AG04449 (cell line): ENCODE measurements at regions of chr5 and their contacts with region 1.

Region 1: GRCh38 chr5:128201065-128201926 is 117.7 kb downstream of the SLC12A2 start:
- DNase-seq: no peak
- H3K4me3 ChIP-seq: peak overlapping the region; percentile 36; the same call in 1 of the 2 replicates
- CTCF ChIP-seq: peak; percentile 80

Region 2: GRCh38 chr5:127564002-127564769 is 637.1 kb before region 1 on chr5:
- CTCF ChIA-PET with region 1: interaction called, 68 read pairs
- POLR2A ChIA-PET with region 1: no interaction called
- DNase-seq: no peak
- H3K4me3 ChIP-seq: no peak overlapping the region
- CTCF ChIP-seq: peak; percentile 58

Region 3: DNA sequence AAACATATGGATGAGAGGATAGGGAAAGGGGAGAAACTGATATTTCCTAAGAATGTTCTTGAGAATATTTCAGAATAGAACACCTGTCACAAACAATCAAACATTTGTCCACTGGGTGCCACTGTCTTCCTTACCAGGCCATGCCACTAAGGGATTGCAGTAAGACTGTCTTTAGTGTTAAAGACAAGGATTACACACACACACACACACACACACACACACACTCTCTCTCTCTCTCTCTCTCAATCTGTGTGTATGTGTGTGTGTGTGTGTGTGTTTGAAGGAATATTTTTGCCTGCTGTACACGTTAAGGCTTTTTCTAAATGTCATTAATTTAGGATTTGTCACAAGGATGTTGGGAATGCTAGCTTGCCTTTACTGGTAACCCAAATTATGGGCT is 443.7 kb before region 1 on chr5:
- CTCF ChIA-PET with region 1: interaction called, 22 read pairs
- POLR2A ChIA-PET with region 1: no interaction called
- DNase-seq: no peak
- H3K4me3 ChIP-seq: no peak overlapping the region
- CTCF ChIP-seq: peak; percentile 29

Region 4: GRCh38 chr5:127875235-127876021 is 325.9 kb before region 1 on chr5:
- CTCF ChIA-PET with region 1: interaction called, 22 read pairs
- POLR2A ChIA-PET with region 1: no interaction called
- DNase-seq: no peak
- H3K4me3 ChIP-seq: no peak overlapping the region
- CTCF ChIP-seq: no peak

Region 5: DNA sequence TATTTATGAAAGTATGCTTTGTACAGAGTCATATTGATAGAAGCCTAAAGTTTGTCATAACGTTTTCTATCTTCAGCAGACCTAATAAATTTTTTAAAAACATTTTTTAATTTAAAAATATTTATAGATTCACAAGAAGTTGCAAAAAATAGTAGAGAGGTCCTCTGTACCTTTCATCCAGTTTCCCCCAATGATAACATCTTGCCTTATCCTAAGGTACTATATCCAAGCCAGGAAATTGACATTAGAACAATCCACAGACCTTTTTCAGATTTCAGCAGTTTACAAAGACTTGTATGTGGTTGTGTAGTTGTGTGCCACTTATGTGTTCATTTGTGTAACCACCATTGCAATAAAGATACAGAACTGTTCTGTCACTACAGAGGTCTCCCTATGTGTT is 29.2 kb before region 1 on chr5:
- CTCF ChIA-PET with region 1: no interaction called
- POLR2A ChIA-PET with region 1: no interaction called
- DNase-seq: no peak
- H3K4me3 ChIP-seq: no peak overlapping the region
- CTCF ChIP-seq: no peak

Region 6: GRCh38 chr5:128213340-128213739 is 12.0 kb after region 1 on chr5:
- CTCF ChIA-PET with region 1: interaction called, 10 read pairs
- POLR2A ChIA-PET with region 1: no interaction called
- DNase-seq: no peak
- H3K4me3 ChIP-seq: no peak overlapping the region
- CTCF ChIP-seq: peak; percentile 67

Region 7: GRCh38 chr5:128905571-128906110 is 704.3 kb after region 1 on chr5:
- CTCF ChIA-PET with region 1: no interaction called
- POLR2A ChIA-PET with region 1: no interaction called
- DNase-seq: peak; percentile 4
- H3K4me3 ChIP-seq: no peak overlapping the region
- CTCF ChIP-seq: peak; percentile 68